GM10248 (cell line): ENCODE measurements at regions of chr5 and their contacts with region 1.

Region 1: DNA sequence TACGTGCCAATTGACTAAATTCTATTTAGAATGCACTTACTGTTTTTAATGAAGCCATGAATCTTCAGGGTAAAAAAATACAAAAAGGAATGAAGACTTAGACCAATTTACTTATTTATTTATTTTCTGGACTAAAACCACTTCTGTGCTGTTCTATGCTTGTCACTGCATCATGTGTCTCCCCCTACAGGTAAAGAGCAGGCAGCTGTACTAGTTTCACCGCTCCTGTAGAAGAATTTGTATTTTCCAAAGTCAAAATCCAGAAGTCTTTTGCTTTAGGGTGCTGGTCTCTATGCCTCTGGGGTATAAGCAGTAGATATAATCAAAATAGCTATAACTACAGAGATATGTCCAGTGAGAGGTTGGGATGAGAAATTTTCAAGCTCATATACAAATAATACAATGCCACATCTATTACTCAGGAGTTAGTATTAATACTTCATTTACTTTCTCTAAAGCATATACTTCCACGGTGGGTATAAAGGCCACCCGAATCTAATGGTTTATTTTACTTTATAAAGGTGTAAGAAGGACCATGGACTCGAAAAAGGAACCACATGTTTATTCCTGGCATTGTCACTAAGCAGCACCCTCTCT is 591.5 kb downstream of the RAB3C start:
- DNase-seq: peak; percentile 20
- CTCF ChIP-seq: peak; percentile 83

Region 2: DNA sequence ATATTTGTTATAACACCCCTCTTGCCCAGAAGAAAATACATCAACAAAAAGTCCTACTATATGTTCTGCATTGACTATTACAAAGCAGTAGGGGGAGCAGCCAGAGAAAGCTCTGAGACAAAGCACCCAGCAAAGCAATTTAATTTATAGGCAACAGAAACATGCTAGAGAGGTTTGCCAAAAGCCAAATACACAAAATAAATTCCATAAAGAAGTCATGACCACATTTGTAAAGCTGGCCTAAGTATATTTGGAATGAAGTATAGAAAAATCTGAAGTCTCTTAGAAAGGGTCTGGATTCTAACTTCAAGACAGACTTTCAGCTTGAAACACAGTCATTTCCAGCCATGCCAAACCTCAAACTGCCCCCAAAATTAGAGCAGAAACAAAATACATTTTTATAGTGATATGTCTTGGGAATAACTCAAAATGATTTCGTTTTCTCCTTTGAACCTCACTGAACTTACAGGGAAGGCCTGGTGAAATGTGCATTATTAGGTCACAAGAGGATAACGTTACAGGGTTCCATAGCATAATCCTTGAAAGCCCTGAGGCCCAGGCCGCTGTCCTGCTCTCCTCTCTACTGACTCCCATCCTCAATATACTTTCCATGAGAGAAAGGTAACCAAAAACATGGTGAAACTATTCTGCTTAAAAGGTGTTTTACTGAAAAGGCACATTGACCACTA is 139.7 kb before region 1 on chr5:
- CTCF ChIA-PET with region 1: interaction called, 46 read pairs
- POLR2A ChIA-PET with region 1: no interaction called
- DNase-seq: peak; percentile 34
- CTCF ChIP-seq: peak; percentile 57

Region 3: DNA sequence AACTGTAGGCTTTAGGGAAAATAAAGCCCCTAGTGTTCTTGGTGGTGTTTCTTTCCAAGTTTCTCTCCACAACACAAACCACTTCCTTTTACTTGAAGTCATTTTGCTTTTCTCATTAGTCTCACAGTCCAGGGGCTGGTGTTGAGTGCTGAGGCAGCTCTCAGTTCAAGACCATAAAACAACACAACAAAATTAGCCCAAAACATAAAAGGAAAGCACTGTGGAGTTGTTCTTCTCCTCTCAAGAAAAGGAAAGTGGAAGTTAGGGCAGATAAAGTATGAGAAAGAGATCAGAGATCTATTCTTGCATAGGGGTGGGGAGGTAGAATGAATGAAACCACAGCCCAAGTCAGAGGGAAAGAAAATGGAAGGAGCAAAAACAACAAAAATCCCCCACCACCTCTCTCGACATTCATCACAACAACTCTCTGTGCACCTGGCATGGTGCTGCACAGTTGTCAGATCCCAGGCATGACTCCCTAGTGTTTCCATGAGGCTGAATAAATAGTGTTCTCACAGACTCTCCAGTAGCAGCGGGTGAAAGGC is 21.6 kb before region 1 on chr5:
- CTCF ChIA-PET with region 1: interaction called, 11 read pairs
- POLR2A ChIA-PET with region 1: no interaction called
- DNase-seq: no peak
- CTCF ChIP-seq: no peak